Activated CD4-positive, alpha-beta memory T cell treated with anti-CD3 and anti-CD28 coated beads for 36 hours (primary cell): ENCODE measurements at regions of chrX and their contacts with region 1.

Region 1: DNA sequence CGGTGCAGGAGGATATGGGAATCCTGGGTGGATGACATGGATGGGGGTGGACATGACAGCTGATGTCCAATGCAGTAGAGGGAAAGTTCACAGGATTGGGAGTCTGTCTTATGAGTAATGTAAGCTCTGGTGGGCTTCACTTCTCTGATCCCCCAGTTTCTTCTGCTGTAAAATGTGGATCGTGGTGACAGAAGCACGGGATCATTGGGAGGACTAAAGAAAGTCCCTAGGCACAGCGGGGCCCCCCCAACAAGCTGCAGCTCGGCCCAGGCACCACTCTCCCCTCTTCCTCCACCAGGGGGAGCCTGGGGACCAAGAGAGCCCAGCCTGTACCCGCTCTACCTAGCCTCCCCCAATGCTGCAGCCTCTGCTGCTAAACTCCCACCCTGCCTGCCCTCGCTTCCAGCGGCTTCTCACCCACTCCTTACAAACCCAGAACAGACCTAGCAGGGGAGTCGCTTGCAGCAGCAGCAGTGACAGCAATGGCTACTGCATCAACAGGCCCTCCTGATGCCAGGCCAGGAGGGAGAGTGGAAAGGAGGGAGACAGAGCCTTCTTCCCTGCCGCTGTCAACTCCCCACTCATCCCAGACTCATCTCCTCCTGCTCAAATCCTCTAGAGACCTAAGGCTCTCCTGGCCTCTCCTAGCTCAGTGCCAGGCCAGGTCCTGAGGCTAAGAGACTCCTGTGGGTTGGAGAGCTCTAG is 36.1 kb upstream of the IQSEC2 start:
- DNase-seq: peak; percentile 72
- H3K4me3 Mint-ChIP-seq: no peak overlapping the region
- H3K27ac Mint-ChIP-seq: no peak overlapping the region
- H3K4me1 Mint-ChIP-seq: peaks cover 10% of the 10 kb centered on the region
- H3K27me3 Mint-ChIP-seq: peaks cover 31% of the 10 kb centered on the region

Region 2: GRCh38 chrX:53284684-53285447 is 32.7 kb before region 1 on chrX:
- CTCF ChIA-PET with region 1: interaction called, 21 read pairs
- POLR2A ChIA-PET with region 1: no interaction called
- intact Hi-C with region 1: no loop called
- DNase-seq: peak; percentile 63
- H3K4me3 Mint-ChIP-seq: no peak overlapping the region
- H3K27ac Mint-ChIP-seq: no peak overlapping the region
- H3K4me1 Mint-ChIP-seq: peaks cover 18% of the 10 kb centered on the region
- H3K27me3 Mint-ChIP-seq: no peaks in the 10 kb centered on the region

Region 3: DNA sequence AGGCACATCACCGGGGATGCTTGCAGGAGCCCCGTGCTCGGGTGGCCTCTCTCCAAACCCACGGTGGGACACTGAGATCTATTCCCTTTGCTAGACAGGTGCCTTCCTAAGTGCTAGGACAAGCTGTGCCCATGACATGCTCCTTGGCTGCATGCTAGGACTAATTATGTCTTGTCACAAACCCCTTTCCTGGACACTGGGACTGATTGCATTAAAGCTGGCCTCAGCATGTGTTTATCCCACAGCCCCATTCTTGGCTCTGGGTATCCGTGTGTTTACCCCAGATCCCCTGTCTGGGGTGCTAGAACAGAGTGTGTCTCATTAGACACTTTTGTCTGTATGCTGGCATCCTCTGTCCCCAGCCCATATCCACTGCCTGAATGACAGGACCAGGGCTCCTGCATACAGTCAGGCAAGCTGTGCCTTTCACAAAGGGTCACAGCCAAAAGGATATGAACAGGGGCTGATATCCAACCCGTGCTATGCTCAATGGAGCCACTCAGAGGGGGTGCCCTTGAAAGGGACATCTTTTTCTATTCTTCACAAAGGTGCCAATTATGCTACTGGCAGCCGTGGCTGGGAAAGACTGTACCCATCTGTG is 27.0 kb before region 1 on chrX:
- CTCF ChIA-PET with region 1: interaction called, 21 read pairs
- POLR2A ChIA-PET with region 1: no interaction called
- intact Hi-C with region 1: no loop called
- DNase-seq: no peak
- H3K4me3 Mint-ChIP-seq: no peak overlapping the region
- H3K27ac Mint-ChIP-seq: no peak overlapping the region
- H3K4me1 Mint-ChIP-seq: peaks cover 13% of the 10 kb centered on the region
- H3K27me3 Mint-ChIP-seq: no peaks in the 10 kb centered on the region

Region 4: DNA sequence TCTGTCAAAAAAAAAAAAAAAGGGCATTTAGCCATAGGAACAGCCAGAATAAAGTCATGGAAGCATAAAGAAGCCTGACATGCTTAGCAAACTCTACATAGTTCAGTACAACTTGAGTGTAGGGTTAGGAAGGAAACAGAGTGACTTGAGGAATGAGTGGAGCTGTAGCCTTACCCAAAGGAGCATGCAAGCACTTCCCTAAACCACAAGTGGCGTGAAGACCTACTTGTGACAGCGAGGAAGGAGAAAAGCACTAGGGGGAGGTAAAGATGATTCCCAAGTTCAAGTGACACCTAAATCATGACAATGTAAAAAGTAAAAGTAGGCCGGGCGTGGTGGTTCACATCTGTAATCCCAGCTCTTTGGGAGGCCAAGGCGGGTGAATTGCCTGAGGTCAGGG is 14.3 kb before region 1 on chrX:
- CTCF ChIA-PET with region 1: interaction called, 17 read pairs
- POLR2A ChIA-PET with region 1: no interaction called
- intact Hi-C with region 1: no loop called
- DNase-seq: no peak
- H3K4me3 Mint-ChIP-seq: no peak overlapping the region
- H3K27ac Mint-ChIP-seq: no peak overlapping the region
- H3K4me1 Mint-ChIP-seq: no peaks in the 10 kb centered on the region
- H3K27me3 Mint-ChIP-seq: no peaks in the 10 kb centered on the region

Region 5: DNA sequence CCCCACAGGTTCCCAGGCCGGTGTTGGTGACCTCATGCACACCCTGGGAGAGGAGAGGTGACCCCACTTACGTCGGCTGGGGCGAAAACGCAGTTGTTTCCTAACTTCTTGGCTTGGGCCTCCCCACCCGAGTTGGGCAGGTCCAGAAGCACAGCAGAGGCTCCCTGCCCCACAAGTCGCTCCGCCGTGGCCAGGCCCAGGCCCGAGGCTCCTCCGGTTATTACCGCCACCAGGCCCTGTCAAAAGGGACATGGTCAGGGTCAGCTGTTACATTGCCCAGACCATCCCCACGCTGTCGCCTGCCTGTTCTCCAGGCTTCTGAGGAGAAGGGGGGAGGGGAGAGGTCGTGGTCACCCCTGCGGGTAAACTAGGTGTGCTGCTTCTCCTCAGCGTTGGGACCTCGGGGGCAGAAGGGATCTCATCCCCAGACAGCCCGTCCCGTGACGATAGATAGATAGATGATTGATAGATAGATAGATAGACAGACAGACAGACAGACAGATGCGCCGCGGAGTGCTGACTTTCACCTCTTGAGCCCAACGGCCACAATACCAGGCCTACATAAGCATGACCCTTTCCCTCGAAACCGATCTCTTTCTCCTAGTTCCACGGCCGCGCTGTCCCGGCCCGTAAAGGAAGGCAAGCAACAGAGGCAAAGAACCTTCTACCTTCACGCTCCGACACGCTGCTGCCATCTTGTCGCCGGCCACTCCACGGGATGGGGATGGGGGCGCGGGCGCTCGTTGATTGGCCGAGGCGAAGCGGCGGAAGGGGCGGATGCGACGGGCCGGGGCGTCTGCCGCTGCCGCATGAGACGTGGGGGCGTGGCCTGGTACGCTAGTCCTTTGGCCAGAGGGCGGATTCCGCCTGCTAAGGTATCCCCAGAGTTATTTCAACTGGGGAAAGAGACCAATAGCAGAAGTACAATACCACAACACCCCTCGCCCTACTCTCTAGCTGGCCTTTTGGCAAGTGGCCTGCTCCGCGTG is 116.4 kb after region 1 on chrX and contains the start of gene HSD17B10:
- CTCF ChIA-PET with region 1: interaction called, 28 read pairs
- POLR2A ChIA-PET with region 1: no interaction called
- intact Hi-C with region 1: loop called (anchors 1 kb)
- DNase-seq: peak; percentile 91
- H3K4me3 Mint-ChIP-seq: peak within 1 kb of the TSS; percentile 92
- H3K27ac Mint-ChIP-seq: peak within 1 kb of the TSS; percentile 83
- H3K4me1 Mint-ChIP-seq: peaks cover 33% of the 10 kb centered on the region
- H3K27me3 Mint-ChIP-seq: no peaks in the 10 kb centered on the region
- total RNA-seq, gene HSD17B10: 75.5 to 80.5 TPM

Region 6: DNA sequence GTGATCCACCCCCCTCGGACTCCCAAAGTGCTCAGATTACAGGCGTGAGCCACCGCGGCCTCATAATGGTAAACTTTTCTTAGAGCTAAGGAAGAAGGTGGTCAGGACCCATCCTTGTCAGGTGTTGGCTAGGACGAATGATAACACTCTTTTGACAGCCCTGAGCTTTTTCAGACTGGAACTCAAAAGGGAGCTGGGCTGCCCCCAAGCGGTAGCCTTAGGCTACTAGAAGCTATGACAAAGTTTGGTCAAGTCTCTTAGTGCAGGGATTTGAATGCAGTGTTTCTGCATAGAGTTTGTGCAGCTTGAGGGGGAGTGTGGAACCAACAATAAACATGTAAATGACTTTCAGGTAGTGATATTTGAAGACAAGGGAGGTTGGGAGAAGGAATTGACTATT is 128.5 kb after region 1 on chrX:
- CTCF ChIA-PET with region 1: interaction called, 81 read pairs
- POLR2A ChIA-PET with region 1: interaction called, 4 read pairs
- intact Hi-C with region 1: loop called (anchors 1 kb)
- DNase-seq: peak; percentile 68
- H3K4me3 Mint-ChIP-seq: no peak overlapping the region
- H3K27ac Mint-ChIP-seq: no peak overlapping the region
- H3K4me1 Mint-ChIP-seq: no peaks in the 10 kb centered on the region
- H3K27me3 Mint-ChIP-seq: no peaks in the 10 kb centered on the region

Region 7: DNA sequence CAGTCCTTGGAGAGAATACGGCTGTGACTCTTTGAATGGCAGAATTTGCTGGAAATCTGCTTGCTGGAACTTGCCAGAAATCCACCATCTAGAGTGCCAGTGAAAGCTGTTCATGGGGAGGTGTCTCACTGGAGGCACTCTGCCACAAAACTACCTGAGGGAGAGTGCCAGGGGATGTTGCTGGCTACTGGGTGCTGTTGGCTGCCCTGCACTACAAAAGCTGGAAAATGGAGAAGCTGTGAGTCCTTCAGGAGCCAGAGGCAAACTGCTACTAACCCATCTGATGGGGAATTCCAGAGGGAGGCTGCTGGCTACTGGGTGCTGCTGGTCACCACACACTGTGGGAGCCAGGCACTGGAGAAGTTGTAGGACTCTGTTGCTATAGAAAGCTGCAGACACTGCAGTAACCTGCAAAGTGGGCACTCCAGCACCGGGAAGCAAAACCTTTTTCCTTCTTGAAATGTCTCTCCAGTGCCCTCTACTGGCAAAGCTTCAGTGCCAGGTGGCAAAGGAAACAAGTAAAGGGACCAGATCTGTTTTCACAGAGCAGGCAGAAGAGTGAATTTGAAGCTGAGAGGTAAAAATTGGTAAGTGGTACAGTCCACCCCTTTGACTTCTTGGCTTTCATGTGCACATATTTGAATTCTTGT is 164.4 kb after region 1 on chrX:
- CTCF ChIA-PET with region 1: interaction called, 72 read pairs
- POLR2A ChIA-PET with region 1: no interaction called
- intact Hi-C with region 1: loop called (anchors 2 kb)
- DNase-seq: peak; percentile 50
- H3K4me3 Mint-ChIP-seq: no peak overlapping the region
- H3K27ac Mint-ChIP-seq: no peak overlapping the region
- H3K4me1 Mint-ChIP-seq: no peaks in the 10 kb centered on the region
- H3K27me3 Mint-ChIP-seq: peaks cover 2% of the 10 kb centered on the region